Tibial artery (tissue), 4 donors: ENCODE measurements at regions of chr3 and their contacts with region 1.

Region 1: DNA sequence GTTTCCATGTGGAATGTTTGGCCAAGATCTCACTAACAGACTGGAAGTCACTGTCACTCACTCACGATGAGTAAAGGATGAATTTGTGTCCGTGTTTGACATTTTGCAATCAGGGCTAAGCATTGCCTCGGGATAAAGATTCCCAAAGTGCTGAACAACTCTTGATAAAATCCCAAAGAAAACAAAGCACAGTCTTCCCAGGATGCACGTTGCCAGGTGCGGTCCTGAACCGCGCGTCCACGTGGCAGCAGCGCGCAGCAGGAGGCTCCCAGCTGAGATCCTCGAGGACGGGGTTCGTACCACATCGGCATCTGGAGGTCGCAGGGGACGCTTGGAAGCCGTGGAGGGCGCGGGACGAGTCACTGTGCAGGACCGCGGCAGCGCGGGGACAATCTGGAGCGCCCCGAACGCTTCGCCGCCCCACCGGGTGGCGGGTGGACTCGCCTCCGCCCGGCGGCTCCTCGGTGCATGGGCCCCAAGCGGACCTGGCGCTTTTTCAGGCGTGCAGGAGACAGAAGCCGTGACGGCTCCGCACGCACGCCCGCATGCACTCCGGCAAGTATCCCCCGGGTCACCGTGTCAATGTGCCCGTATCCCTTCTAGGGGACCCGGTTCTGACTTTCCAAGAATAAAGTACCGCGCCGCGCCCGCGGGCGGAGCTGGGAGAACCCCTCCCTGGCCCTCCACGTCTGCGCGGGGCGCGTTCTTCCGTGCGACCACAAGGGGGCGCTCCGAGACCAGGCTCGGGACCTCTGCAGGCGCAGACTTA is 17.7 kb downstream of the CPN2 start:
- DNase-seq: peak; percentile 82 to 89
- H3K4me3 ChIP-seq: peak overlapping the region; percentile 31 to 48
- H3K27ac ChIP-seq: no peak overlapping the region
- H3K4me1 ChIP-seq: peaks cover 0 to 5% (median 5%) of the 10 kb centered on the region in 4 donors
- H3K27me3 ChIP-seq: peaks cover 0 to 59% of the 10 kb centered on the region in 2 donors
- CTCF ChIP-seq: peak; percentile 97 to 98

Region 2: DNA sequence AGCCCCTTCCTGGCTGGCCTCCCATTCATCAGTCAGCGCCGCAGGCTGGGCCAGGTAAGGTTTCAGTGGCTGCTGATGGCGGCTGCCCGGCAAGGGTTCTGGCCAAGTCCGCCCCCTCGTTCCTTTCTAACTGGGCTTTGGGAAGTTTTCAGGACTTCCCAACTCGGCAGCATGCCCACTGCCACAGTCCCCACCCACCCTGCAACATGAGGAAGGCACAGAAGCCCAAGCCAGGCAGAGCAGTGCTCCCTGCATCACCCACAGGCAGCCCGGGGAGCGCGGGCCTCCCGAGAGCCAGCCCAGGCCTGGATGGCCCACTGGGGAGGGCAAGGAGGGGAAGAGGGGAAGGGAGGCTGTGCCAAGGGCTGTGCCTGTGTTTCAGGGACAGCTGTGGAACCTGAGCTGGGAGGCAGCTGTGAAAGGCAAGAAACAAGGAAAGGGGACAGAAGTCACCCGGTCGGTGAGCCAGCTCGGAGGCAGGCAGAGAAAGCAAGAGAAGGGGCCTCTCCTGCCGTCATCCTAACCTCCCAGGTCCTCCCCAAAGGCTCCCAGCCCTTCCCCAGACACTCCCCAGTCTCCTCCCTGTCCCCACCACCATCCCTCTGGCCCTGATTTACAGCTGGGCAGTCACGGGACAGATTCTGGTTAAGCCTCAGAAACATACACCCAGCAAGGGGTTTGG is 56.2 kb before region 1 on chr3:
- intact Hi-C with region 1: no loop called
- DNase-seq: peak; percentile 68 to 91
- H3K4me3 ChIP-seq: peak overlapping the region in 1 of 2 donors; percentile 10
- H3K27ac ChIP-seq: peak overlapping the region; percentile 79 to 87
- H3K4me1 ChIP-seq: peaks cover 0 to 62% (median 51%) of the 10 kb centered on the region in 4 donors
- H3K27me3 ChIP-seq: no peaks in the 10 kb centered on the region
- CTCF ChIP-seq: no peak

Region 3: DNA sequence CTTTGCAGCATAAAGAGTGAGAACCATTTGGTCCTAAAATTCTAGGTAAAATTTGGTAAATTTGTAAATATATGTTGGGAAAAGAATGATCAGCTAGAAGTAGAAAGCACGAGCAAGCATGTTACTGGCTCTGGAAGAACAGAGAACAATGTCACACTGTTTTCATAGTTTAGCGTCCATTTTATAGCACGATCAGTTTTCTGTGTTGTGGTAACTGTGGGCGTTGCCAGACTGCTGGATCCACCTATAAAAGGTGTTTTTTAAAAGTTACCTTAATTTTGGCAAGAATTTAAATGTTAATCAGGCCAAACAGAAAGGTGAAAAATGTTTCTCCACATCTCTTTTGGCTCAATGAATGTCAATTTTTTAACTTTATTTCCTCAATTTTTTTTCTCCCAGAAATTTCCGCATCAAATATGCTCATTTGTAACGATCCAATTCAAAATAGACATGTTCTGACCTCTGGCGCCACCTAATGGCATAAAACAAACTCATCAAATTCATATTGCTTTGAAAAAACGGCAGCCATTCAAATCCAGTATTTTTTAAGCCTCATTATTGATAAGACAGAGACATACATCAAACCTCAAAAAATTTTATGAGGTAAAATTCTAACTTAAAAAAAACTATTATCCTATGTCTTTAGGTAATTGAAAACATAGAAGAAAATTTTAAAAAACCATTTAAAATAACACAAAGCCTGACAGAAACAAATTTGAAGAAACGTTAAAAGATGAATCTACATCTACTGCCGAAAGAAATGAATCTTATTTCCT is 71.2 kb after region 1 on chr3:
- intact Hi-C with region 1: loop called (anchors 10 kb)
- DNase-seq: no peak
- H3K4me3 ChIP-seq: no peak overlapping the region
- H3K27ac ChIP-seq: no peak overlapping the region
- H3K4me1 ChIP-seq: no peaks in the 10 kb centered on the region
- H3K27me3 ChIP-seq: no peaks in the 10 kb centered on the region
- CTCF ChIP-seq: peak; percentile 55 to 62

Region 4: DNA sequence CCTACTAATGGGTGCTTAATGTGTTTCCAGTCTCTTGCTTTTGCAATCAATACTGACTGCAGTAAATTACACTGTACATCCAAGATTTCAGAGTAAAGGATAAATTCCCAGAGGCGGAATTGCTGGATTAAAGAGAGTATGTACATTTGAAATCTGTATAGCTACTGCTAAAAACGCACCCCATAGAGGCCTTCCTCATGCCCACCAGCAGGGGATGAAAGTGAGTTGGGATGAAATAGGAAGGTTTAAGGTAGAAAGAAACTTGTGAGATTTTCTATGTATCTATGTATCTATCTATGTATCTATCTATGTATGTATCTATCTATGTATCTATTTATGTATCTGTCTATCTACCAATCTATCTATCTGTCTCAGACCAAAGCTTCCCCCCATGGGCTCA is 271.4 kb after region 1 on chr3:
- intact Hi-C with region 1: loop called (anchors 10 kb)
- DNase-seq: no peak
- H3K4me3 ChIP-seq: no peak overlapping the region
- H3K27ac ChIP-seq: no peak overlapping the region
- H3K4me1 ChIP-seq: no peaks in the 10 kb centered on the region
- H3K27me3 ChIP-seq: no peaks in the 10 kb centered on the region
- CTCF ChIP-seq: no peak